Adrenal gland (tissue), 19 donors: ENCODE measurements at regions of chr7 and their contacts with region 1.

Region 1: DNA sequence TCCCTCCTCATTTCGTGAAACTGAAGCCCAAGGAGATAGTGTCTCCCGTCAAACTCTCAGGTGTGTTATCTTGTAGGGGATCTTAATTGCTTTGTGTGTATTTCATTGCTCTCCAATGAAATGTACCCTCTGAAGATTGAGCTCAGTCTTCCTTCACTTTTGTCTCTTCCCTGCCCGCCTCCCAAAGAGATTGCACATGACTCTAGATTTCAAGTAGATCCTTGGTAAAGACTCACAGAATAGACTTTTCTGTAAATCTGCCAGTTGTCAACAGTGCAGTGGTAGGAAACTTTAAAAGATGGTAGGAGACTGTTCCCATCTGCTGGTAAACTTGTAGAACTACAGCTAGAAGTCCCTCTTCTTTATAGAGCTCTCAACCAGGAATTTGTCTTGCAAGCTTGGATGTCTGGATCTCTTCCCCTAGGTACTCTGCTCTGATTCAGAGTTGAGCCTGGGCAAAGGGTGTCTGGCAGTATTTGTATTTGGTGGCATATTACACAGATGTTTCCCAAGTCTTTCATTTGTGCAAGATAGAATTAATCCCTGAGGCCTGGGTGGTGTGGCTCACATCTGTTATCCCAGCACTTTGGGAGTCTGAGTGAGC is 9.6 kb downstream of the CCL26 start:
- DNase-seq: no peak
- H3K4me3 ChIP-seq: no peak overlapping the region
- H3K27ac ChIP-seq: no peak overlapping the region
- H3K4me1 ChIP-seq: no peaks in the 10 kb centered on the region
- H3K27me3 ChIP-seq: no peaks in the 10 kb centered on the region
- CTCF ChIP-seq: peak; percentile 65 to 86 (median 82)
- POLR2A ChIP-seq: no peak

Region 2: DNA sequence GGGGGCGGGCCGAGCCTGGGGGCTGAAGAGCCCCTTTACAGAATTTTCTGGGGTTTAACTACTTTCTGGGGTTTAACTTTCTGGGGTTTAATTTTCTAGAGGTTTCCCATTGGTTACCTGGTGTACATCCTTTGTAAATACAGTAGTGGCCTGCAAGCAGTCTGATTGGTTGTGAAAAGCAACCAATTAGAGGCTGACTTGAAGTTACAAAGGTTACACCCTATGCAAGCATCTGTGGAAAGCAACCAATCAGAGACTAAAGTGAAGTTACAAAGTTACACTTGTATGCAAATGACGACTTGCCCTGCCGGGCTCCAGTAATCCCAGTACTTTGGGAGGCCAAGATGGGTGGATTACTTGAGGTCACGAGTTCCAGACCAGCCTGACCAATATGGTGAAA is 1077.5 kb before region 1 on chr7:
- intact Hi-C with region 1: no loop called
- DNase-seq: peak in 1 of 7 donors; percentile 31
- H3K4me3 ChIP-seq: no peak overlapping the region
- H3K27ac ChIP-seq: no peak overlapping the region
- H3K4me1 ChIP-seq: peaks cover 0 to 17% of the 10 kb centered on the region in 2 donors
- H3K27me3 ChIP-seq: no peaks in the 10 kb centered on the region
- CTCF ChIP-seq: no peak
- POLR2A ChIP-seq: no peak

Region 3: DNA sequence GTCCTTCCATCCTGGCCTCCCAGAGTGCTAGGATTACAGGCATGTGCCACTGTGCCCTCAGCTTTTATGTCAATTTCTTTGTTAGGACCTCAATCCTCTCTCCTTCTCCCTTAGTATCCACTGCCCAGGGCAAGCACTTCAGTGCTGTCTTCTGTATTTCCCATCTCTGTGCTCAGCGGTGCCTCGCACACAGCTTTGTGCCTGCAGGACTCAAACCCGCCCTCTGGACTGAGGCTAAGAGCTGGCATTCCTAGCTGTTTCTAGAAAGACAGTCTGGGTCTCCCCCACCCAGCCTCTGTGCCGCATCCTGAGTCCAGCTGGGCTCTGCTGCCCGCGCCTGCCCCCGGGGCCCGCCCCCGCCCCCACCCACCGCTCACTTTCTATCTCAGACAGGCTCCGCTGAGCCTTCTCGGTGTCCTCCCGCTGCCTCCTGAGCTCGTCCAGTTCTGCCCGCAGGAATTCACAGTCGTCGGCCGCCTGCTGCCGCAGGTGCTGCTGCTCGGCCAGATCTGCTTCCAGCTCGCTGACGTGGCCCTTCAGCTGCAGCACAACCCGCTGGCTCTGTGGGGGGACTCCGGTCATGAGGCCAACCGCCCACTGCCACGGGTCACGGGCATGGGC is 203.0 kb before region 1 on chr7:
- intact Hi-C with region 1: loop called in 1 of 2 experiments (anchors 10 kb)
- DNase-seq: no peak
- H3K4me3 ChIP-seq: no peak overlapping the region
- H3K27ac ChIP-seq: no peak overlapping the region
- H3K4me1 ChIP-seq: no peaks in the 10 kb centered on the region
- H3K27me3 ChIP-seq: no peaks in the 10 kb centered on the region
- CTCF ChIP-seq: no peak
- POLR2A ChIP-seq: no peak